ENCODE measurements at regions of chr5 and their contacts with region 1.

Region 1: DNA sequence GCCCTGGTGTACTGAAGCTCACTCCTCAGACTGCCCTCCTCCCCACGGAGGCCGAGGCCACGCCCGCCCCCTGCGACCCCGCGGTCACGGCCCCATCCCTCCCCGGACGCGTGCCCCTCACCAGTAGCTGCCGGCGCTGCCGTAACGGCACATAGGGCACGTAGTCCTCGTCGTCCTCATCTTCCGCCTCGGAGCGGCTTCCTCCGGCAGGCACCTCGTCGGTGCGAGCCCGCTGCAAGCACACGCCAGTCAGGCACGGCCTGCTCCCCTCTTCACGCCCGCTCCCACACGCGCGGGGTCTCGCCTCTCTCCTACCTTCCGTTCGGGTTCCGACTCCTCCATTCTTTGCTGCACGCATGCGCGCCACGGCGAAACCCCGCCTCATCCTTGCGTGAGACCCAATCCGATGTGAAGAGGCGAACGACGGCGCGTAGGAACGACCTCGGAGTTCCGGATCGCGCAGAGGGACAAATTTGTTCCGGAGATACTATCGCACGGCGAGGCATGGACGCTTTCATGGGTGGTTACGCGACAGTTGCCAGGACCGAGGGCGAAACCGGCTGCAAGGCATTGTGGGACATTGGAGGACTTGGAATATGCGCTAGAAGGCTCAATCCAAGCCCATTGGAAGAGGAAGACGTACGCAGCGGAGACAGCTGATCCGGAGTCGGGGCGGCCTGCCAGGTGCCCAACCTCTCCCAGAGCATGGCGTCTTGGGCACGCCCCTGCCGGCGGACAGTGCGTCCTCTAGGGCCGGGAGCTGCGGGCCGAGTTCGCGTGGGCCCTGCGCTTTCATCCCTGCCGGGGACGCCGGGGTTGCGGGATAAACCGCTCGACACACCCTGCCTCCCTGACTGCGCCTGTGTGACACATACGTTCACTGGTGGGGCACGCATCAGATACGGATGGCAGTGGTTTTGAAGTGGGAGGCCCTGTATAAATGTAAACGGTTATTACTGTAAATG is at the start of gene DDX41:
- DNase-seq: peak; percentile 90 to 97
- H3K4me3 ChIP-seq: peak within 1 kb of the TSS; percentile 82 to 98 (median 96)
- H3K27ac ChIP-seq: peak within 1 kb of the TSS; percentile 76
- H3K4me1 ChIP-seq: peaks cover 0 to 6% (median 5%) of the 10 kb centered on the region in 4 experiments; a peak in 5 of 7 replicates
- H3K27me3 ChIP-seq: no peaks in the 10 kb centered on the region
- CTCF ChIP-seq: no peak
- EP300 ChIP-seq: no peak
- POLR2A ChIP-seq: peak in 1 of 2 experiments; percentile 25; a peak in 1 of 3 replicates
- RAD21 ChIP-seq: no peak
- total RNA-seq, gene DDX41: 101 and 102 TPM in 2 replicates

Region 2: DNA sequence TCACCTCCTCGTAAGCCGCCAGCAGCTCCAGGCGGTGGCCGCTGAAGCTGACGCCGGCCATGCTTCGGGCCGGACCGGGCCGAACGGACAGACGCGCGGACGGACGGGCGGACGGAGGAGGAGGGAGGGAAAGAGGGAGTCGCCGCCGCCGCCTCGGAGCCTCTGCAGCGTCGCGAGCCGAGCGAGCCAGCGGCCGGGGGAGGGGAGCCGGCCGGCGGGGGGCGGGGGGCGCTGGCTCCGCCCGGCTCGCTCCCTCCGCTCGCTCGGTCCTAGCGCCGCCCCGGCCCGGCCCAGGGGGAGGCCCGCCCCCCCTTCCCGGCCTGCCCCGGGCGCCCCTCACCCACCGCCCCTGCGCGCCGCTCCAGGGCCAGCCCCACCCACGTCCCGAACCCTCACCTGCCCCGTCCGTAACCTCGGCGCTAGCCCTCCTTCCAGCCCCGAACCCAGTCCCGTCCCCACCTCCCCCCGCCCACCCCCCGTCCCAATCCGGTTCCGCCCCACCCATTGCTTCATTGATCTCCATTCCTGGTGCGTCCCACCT is 43.4 kb before region 1 on chr5 and contains the start of gene DBN1:
- CTCF ChIA-PET with region 1: interaction called, 4 read pairs
- POLR2A ChIA-PET with region 1: interaction called, 3,349 read pairs
- DNase-seq: peak in 1 of 2 experiments; percentile 74
- H3K4me3 ChIP-seq: peak within 1 kb of the TSS; percentile 78 to 96 (median 88)
- H3K27ac ChIP-seq: peak within 1 kb of the TSS; percentile 90
- H3K4me1 ChIP-seq: peaks cover 11 to 46% (median 39%) of the 10 kb centered on the region in 4 experiments
- H3K27me3 ChIP-seq: no peaks in the 10 kb centered on the region
- CTCF ChIP-seq: no peak
- EP300 ChIP-seq: no peak
- POLR2A ChIP-seq: no peak; a peak in 1 of 3 replicates
- RAD21 ChIP-seq: no peak
- total RNA-seq, gene DBN1: 325 and 333 TPM in 2 replicates

Region 3: GRCh38 chr5:177530638-177531037 is 13.8 kb after region 1 on chr5:
- CTCF ChIA-PET with region 1: interaction called, 7 read pairs
- POLR2A ChIA-PET with region 1: interaction called, 11 read pairs
- DNase-seq: no peak
- H3K4me3 ChIP-seq: no peak overlapping the region
- H3K27ac ChIP-seq: no peak overlapping the region
- H3K4me1 ChIP-seq: no peaks in the 10 kb centered on the region
- H3K27me3 ChIP-seq: no peaks in the 10 kb centered on the region
- CTCF ChIP-seq: no peak
- EP300 ChIP-seq: no peak
- POLR2A ChIP-seq: no peak
- RAD21 ChIP-seq: no peak

Region 4: DNA sequence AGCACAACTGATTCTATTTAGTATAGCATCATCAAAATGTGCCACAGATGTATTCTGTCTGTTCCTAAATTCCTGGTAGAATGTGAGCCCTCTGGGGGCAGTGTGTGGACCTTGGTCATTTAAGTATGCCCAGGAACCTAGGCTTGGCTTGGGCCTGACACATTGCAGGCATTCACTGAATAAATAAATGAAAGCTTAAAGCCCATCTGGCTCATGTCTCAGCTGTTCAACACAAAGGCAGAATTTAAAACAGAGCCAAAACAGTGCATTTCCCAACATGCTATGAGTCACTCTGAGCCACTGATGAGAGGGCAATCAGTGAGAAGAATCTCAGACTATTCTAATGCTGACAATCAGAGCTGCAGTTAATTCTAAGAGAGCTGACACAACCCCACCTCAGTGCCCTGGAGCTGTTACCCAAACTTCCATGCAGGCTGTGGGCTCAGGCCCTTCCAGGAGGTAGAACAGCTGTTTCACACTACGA is 29.4 kb after region 1 on chr5:
- CTCF ChIA-PET with region 1: no interaction called
- POLR2A ChIA-PET with region 1: interaction called, 11 read pairs
- DNase-seq: peak in 1 of 2 experiments; percentile 31
- H3K4me3 ChIP-seq: no peak overlapping the region
- H3K27ac ChIP-seq: no peak overlapping the region
- H3K4me1 ChIP-seq: no peaks in the 10 kb centered on the region
- H3K27me3 ChIP-seq: no peaks in the 10 kb centered on the region
- CTCF ChIP-seq: no peak
- EP300 ChIP-seq: no peak
- POLR2A ChIP-seq: no peak
- RAD21 ChIP-seq: no peak